Activated CD4-positive, alpha-beta T cell treated with anti-CD3 and anti-CD28 coated beads for 36 hours (primary cell): ENCODE measurements at regions of chr1 and their contacts with region 1.

Region 1: DNA sequence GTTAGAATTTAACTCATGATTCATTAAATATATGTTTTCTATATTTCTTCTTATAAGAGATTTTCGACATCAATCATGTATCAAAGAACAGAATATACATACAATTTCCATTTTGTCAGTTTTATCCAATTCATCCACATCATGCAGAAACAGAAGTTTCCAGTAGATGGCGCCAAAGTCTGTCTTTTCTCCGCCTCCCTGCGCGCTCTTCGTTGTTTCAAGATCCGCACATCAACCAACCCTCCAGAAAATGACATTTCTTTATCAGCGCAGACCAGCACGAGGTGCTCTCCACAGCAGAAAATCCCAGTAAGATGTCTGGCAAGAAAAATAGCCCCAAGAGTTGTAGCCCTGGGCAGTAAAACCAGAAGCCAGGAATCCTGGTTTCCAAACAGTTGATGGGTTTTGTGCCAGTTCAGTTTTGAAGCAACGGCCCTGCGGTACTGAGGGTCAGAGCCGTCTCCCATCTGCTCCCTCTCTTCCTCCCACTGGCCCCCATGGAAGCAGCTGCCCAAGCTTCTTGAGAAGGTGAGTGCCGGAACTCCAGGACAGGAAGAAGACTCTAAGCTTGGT is 38.6 kb upstream of the GPR137B start:
- DNase-seq: peak; percentile 75
- ATAC-seq: peak; percentile 80
- H3K4me3 Mint-ChIP-seq: no peak overlapping the region
- H3K27ac Mint-ChIP-seq: no peak overlapping the region
- H3K4me1 Mint-ChIP-seq: peaks cover 2% of the 10 kb centered on the region
- H3K27me3 Mint-ChIP-seq: peaks cover 2% of the 10 kb centered on the region

Region 2: DNA sequence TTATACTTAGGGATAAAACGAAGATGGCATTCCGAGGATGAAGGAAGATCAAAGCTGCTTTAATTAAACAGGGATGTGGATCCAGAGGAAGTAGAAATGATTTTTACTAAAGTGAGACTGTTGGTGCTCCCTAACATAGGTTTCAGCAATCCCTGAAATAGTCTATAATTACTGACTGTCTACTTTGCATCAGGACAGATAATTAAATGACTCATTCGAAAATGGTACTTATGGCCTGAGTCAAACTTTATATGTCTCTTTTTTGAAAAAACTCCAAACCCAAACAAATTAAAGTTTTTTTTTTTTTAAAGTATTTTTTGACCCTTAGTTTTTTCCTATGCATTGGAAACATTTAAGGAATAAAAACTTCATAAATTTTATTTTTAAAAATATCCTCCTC is 327.3 kb before region 1 on chr1:
- CTCF ChIA-PET with region 1: no interaction called
- POLR2A ChIA-PET with region 1: no interaction called
- intact Hi-C with region 1: no loop called
- DNase-seq: no peak
- ATAC-seq: no peak
- H3K4me3 Mint-ChIP-seq: no peak overlapping the region
- H3K27ac Mint-ChIP-seq: no peak overlapping the region
- H3K4me1 Mint-ChIP-seq: no peaks in the 10 kb centered on the region
- H3K27me3 Mint-ChIP-seq: no peaks in the 10 kb centered on the region

Region 3: GRCh38 chr1:236168716-236169429 is 65.1 kb after region 1 on chr1:
- CTCF ChIA-PET with region 1: interaction called, 3 read pairs
- POLR2A ChIA-PET with region 1: no interaction called
- intact Hi-C with region 1: loop called in 1 of 2 experiments (anchors 2 kb)
- DNase-seq: peak; percentile 54
- ATAC-seq: peak; percentile 52
- H3K4me3 Mint-ChIP-seq: no peak overlapping the region
- H3K27ac Mint-ChIP-seq: no peak overlapping the region
- H3K4me1 Mint-ChIP-seq: peaks cover 5% of the 10 kb centered on the region
- H3K27me3 Mint-ChIP-seq: no peaks in the 10 kb centered on the region

Region 4: DNA sequence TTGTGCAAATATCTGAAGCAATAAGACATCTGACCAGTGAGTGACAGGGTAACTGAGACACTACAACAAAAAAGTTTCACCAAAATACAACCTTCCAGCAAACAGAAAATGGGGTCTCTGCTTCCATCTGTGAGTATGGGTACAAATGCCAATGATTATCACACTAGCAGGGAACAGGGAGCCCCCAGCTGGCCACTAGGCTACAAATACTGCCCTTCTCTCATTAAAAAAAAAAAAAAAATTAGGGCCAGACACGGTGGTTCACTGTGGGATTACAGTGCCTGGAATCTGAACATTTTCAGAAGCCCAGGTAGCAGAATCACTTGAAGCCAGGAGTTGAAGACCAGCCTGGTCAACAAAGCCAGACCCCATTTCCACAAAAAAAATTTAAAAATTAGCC is 242.0 kb after region 1 on chr1:
- CTCF ChIA-PET with region 1: no interaction called
- POLR2A ChIA-PET with region 1: no interaction called
- intact Hi-C with region 1: loop called in 1 of 2 experiments (anchors 5 kb)
- DNase-seq: no peak
- ATAC-seq: no peak
- H3K4me3 Mint-ChIP-seq: no peak overlapping the region
- H3K27ac Mint-ChIP-seq: no peak overlapping the region
- H3K4me1 Mint-ChIP-seq: peaks cover 2% of the 10 kb centered on the region
- H3K27me3 Mint-ChIP-seq: peaks cover 14% of the 10 kb centered on the region

Region 5: DNA sequence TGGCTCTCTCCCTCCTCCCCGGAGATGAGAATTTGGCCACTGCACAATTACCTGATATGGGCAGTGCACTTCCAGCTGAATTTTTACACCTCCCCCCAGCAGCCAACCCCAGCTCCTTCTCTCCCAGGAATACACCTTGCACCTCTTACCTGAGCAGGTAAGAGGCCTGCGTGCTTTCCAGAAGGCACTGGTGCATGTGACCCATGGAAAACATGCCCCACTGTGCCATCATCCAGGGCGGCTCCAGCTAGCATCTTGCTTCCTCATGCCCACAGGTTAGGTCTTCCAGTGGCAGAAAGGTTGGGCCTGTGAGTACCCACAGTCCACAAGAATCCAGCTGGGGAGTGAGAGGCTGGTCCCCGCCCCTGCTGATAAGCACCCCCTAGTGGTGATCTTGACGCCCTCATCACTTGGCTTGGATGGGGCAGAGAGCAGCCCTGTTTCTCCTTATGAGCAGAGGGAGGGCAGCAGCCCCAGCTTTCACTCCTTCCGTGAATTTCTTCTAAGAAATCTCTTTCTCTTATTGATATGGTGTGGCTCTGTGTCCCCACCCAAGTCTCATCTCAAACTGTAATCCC is 348.2 kb after region 1 on chr1:
- CTCF ChIA-PET with region 1: interaction called, 11 read pairs
- POLR2A ChIA-PET with region 1: no interaction called
- intact Hi-C with region 1: no loop called
- DNase-seq: peak; percentile 64
- ATAC-seq: peak; percentile 60
- H3K4me3 Mint-ChIP-seq: no peak overlapping the region
- H3K27ac Mint-ChIP-seq: no peak overlapping the region
- H3K4me1 Mint-ChIP-seq: no peaks in the 10 kb centered on the region
- H3K27me3 Mint-ChIP-seq: no peaks in the 10 kb centered on the region

Region 6: DNA sequence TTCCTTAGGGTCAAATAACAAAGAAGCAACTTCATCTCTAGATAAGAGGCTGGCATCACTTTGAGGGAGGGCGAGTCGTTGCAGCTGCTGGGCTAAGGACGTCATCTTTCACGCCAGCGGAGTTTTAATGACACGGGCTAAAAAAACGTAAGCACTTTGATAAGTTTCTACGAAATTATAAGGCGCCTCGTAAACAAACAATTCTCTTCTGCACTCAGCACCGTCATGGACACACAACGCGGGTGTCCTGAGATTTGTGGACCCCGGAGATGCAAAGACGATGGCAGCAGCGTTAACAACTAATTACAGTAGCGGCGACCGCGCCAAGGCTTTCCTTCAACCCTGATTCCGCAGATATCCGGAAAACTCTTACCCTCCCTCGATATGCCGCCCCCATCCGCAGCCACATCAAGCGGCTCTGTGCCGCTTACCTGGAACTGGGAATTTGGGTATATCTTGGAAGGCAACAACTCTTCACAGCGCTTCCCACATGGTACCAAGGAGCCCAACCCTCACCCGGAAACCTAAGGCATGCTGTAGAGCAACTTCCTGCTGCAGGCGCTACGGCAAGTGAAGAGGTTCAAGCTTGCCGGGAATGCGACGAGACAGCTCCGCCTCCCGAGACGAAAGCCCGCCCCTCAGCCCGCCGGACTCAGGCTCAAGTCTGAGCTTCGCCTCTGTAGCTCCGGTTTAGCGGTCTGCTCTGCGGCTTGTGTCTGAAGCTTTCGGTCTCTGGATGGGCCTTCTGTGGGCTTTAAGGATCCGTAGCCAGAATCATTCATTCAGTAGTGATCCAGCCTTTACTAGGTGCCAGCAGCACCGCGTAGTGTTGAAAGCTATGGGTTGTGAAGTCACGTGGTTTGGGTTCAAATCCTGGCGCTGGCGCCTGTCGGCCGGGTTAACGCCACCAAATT is 500.5 kb after region 1 on chr1 and contains the start of gene HEATR1:
- CTCF ChIA-PET with region 1: no interaction called
- POLR2A ChIA-PET with region 1: no interaction called
- intact Hi-C with region 1: loop called in 1 of 2 experiments (anchors 5 kb)
- DNase-seq: peak; percentile 94
- ATAC-seq: peak; percentile 94
- H3K4me3 Mint-ChIP-seq: peak within 1 kb of the TSS; percentile 98
- H3K27ac Mint-ChIP-seq: peak within 1 kb of the TSS; percentile 94
- H3K4me1 Mint-ChIP-seq: peaks cover 21% of the 10 kb centered on the region
- H3K27me3 Mint-ChIP-seq: peaks cover 7% of the 10 kb centered on the region
- total RNA-seq, gene HEATR1: 82.4 to 89.1 TPM

Region 7: GRCh38 chr1:237386362-237387143 is 1282.8 kb after region 1 on chr1:
- CTCF ChIA-PET with region 1: no interaction called
- POLR2A ChIA-PET with region 1: no interaction called
- intact Hi-C with region 1: loop called in 1 of 2 experiments (anchors 10 kb)
- DNase-seq: no peak
- ATAC-seq: no peak
- H3K4me3 Mint-ChIP-seq: no peak overlapping the region
- H3K27ac Mint-ChIP-seq: no peak overlapping the region
- H3K4me1 Mint-ChIP-seq: no peaks in the 10 kb centered on the region
- H3K27me3 Mint-ChIP-seq: peaks cover 2% of the 10 kb centered on the region